ENCODE measurements at regions of chr1 and their contacts with region 1.

Region 1: DNA sequence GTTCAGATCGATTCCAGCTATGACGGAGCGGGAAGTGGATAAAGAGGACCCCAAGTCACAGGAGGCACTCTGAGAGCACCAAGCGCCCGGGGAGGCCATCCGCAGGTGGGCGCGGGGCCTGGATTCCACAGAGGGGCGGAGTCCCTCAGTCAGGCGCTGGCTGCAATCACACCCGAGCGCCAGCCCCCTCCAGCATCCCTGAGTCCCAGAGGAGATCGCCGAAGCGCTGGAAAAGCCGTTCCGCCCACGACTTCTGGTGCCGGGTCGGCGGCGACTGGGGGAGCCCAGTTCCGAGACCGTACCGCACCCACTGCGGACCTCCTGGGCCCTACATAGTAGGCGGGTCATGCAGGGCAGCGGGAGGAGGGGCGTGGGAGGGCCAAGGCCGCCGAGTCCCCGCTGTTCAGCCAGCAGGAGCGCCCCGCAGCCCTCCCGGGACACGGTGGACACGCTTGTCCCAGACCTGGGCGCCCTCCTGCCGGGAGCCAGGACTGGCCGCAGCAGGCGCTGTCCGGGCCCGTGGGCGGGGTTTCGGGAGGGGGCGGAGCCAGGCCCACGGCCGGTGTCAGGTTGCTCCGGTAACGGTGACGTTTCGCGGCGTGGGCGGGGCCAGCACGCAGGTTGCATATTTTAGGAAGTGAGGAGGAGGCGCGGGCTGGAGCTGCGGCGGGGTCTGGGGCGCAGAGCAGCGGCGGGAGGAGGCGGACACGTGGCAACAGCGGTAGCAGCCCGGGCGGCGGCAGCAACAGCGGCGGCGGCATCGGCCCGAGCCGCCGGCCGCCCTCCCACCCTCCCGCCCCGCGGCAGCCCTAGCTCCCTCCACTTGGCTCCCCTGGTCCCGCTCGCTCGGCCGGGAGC is at the start of gene ATP1A1:
- DNase-seq: peak; percentile 89 to 99
- H3K4me3 ChIP-seq: peak within 1 kb of the TSS; percentile 84 to 89 (median 86)
- H3K27ac ChIP-seq: peak within 1 kb of the TSS; percentile 92
- H3K4me1 ChIP-seq: peaks cover 3 to 19% (median 17%) of the 10 kb centered on the region in 4 experiments
- H3K27me3 ChIP-seq: no peaks in the 10 kb centered on the region; a peak in 3 of 7 replicates
- CTCF ChIP-seq: no peak
- EP300 ChIP-seq: peak; percentile 7 to 98; a peak in 1 of 3 replicates
- POLR2A ChIP-seq: peak; percentile 95 to 96
- RAD21 ChIP-seq: 0 out of 4 replicates have a peak, but pooled peaks of 1 of the 2 experiments have one; percentile 3
- total RNA-seq, gene ATP1A1: 325 and 326 TPM in 2 replicates

Region 2: GRCh38 chr1:116020668-116021275 is 352.0 kb before region 1 on chr1:
- CTCF ChIA-PET with region 1: no interaction called
- POLR2A ChIA-PET with region 1: no interaction called
- DNase-seq: peak; percentile 33 to 63
- H3K4me3 ChIP-seq: no peak overlapping the region
- H3K27ac ChIP-seq: no peak overlapping the region
- H3K4me1 ChIP-seq: no peaks in the 10 kb centered on the region
- H3K27me3 ChIP-seq: no peaks in the 10 kb centered on the region
- CTCF ChIP-seq: peak; percentile 55 to 79 (median 70)
- EP300 ChIP-seq: no peak
- POLR2A ChIP-seq: no peak
- RAD21 ChIP-seq: peak; percentile 71 to 72; a peak in 3 of 4 replicates

Region 3: GRCh38 chr1:116360429-116361173 is 12.2 kb before region 1 on chr1:
- CTCF ChIA-PET with region 1: interaction called, 14 read pairs
- POLR2A ChIA-PET with region 1: interaction called, 8 read pairs
- DNase-seq: no peak
- H3K4me3 ChIP-seq: no peak overlapping the region
- H3K27ac ChIP-seq: no peak overlapping the region
- H3K4me1 ChIP-seq: no peaks in the 10 kb centered on the region; a peak in 1 of 7 replicates
- H3K27me3 ChIP-seq: no peaks in the 10 kb centered on the region
- CTCF ChIP-seq: no peak
- EP300 ChIP-seq: no peak
- POLR2A ChIP-seq: no peak
- RAD21 ChIP-seq: no peak

Measured in H1 (cell line).